ENCODE measurements at regions of chr15 and their contacts with region 1.

Region 1: DNA sequence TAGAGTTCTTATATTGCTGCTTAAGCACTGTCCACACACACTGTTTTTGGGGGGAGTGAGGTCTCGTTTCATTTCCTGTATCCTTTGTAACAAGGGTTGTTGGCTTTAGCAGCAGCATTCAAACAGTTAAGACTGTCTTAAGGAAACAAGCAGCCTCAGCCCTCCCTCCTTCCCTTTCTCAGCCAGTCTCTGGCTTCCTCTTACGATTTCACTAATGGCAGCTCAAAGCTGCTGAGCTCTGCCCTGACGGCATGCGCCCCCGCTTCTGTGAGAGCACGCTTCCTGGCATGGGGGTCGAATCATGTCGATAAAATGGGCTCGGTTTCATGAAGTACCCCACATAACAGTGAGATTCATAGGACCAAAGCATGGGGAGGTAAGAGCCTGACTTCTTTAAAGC is 105.0 kb downstream of the KLHL25 start:
- DNase-seq: peak; percentile 83
- ATAC-seq: peak; percentile 75
- H3K4me3 Mint-ChIP-seq: peak overlapping the region; percentile 87
- H3K27ac Mint-ChIP-seq: peak overlapping the region; percentile 97
- H3K4me1 Mint-ChIP-seq: peaks cover 67% of the 10 kb centered on the region
- H3K27me3 Mint-ChIP-seq: no peaks in the 10 kb centered on the region

Region 2: DNA sequence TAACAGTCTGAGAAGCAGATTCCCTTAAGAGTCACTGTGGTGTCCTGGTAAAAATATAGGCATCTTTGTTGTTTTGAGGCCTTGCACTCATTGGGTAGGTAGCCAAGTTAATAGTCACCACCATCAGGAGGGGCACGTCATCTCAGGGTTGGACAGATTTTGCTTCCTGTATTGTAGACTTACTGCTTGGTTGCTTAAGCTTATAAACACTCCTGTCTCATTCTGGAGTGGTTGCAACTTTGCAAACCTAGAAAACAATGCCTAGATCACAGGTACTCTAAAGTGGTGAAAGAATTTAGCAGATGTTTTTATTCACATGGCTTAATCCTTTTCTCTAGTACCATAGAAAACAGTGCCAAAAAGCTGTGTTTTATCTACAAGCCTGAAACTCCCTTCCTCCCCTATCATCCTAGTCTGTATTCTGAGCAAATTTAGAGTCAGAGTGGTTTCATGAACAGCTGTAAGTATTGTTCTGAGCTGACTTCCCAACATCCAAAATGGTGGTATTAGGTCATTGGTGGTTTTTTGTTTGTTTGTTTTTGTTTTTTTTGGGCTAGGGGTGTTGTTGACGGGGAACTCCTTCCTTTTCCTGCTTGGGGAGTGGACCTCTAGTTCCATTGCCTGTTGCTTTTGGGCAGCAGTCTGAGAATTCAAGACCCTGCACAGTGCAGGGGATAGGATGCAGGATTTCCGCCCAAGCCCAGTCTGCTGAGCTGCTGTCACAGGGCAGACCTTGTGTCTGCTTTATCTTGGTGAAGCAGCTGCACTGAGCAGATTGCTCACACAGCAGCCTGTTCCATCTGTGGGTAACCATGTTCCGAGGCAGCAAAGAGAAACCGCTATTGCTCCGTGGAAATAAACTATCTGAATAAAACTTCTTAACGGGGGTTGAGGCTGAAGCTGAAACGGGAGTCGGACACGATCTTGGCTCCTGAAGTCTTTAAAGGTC is 107.3 kb before region 1 on chr15:
- CTCF ChIA-PET with region 1: interaction called, 10 read pairs
- POLR2A ChIA-PET with region 1: interaction called, 40 read pairs
- DNase-seq: peak; percentile 82
- ATAC-seq: peak; percentile 90
- H3K4me3 Mint-ChIP-seq: peak overlapping the region; percentile 82
- H3K27ac Mint-ChIP-seq: peak overlapping the region; percentile 95
- H3K4me1 Mint-ChIP-seq: peaks cover 65% of the 10 kb centered on the region
- H3K27me3 Mint-ChIP-seq: no peaks in the 10 kb centered on the region

Region 3: DNA sequence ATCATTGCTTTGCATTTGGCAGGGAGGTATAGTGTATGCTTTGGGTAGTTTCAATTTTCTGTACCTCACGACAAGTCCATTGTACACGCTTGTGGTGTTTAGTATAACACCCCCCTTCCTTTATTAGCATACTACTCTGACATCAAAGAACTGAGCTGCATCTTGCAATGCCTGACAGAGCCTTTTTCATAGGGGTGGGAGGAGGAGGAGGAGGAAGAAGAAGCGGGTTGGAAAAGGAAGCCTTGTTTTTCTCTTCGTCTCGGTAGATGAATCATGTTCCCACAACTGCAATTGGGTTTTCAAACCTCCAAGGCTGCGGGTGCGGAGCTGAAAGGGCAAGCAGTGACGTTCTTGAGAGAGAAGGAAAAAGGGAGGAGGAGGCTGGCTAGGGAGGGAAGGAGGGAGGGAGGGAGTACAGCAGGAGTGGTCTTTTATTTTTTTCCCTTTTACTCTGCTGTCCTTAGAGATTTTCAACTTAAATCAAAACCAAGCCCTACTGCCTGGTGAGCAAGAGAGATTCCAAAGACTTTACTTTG is 70.7 kb before region 1 on chr15:
- CTCF ChIA-PET with region 1: interaction called, 14 read pairs
- POLR2A ChIA-PET with region 1: interaction called, 17 read pairs
- DNase-seq: peak; percentile 59
- ATAC-seq: peak; percentile 84
- H3K4me3 Mint-ChIP-seq: no peak overlapping the region
- H3K27ac Mint-ChIP-seq: no peak overlapping the region
- H3K4me1 Mint-ChIP-seq: peaks cover 26% of the 10 kb centered on the region
- H3K27me3 Mint-ChIP-seq: no peaks in the 10 kb centered on the region

Region 4: GRCh38 chr15:85625856-85626255 is 63.9 kb before region 1 on chr15:
- CTCF ChIA-PET with region 1: interaction called, 13 read pairs
- POLR2A ChIA-PET with region 1: interaction called, 15 read pairs
- DNase-seq: peak; percentile 55
- ATAC-seq: peak; percentile 77
- H3K4me3 Mint-ChIP-seq: peak overlapping the region; percentile 64
- H3K27ac Mint-ChIP-seq: peak overlapping the region; percentile 60
- H3K4me1 Mint-ChIP-seq: peaks cover 60% of the 10 kb centered on the region
- H3K27me3 Mint-ChIP-seq: no peaks in the 10 kb centered on the region

Region 5: DNA sequence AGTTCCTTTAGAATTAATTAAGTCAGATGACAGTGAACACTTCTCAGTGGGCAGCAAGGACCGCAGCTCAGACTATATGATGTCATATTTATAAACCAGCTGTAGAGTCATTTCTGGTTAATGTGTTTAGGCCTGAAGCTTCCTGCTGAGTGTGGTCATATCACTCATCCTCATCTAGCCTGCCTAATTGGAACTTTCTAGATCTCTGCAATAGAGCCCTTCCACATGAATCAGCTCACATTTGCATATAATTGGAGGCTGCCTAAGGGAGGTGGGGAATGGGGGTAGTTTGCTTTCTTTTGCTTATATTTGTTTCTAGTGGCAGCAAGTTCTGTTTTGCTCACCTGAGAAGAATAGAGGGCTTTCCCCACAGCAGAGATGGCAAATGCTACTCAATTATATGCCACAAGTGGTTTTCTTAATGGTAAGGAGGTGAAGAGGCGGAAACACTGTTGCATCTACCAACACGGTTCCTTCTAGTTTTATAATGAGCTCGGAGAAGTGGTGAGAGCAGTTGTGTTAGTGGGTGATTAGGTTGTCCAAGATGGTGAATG is 43.1 kb before region 1 on chr15:
- CTCF ChIA-PET with region 1: interaction called, 4 read pairs
- POLR2A ChIA-PET with region 1: interaction called, 35 read pairs
- DNase-seq: peak; percentile 61
- ATAC-seq: peak; percentile 81
- H3K4me3 Mint-ChIP-seq: peak overlapping the region; percentile 34
- H3K27ac Mint-ChIP-seq: peak overlapping the region; percentile 64
- H3K4me1 Mint-ChIP-seq: peaks cover 41% of the 10 kb centered on the region
- H3K27me3 Mint-ChIP-seq: no peaks in the 10 kb centered on the region

Region 6: DNA sequence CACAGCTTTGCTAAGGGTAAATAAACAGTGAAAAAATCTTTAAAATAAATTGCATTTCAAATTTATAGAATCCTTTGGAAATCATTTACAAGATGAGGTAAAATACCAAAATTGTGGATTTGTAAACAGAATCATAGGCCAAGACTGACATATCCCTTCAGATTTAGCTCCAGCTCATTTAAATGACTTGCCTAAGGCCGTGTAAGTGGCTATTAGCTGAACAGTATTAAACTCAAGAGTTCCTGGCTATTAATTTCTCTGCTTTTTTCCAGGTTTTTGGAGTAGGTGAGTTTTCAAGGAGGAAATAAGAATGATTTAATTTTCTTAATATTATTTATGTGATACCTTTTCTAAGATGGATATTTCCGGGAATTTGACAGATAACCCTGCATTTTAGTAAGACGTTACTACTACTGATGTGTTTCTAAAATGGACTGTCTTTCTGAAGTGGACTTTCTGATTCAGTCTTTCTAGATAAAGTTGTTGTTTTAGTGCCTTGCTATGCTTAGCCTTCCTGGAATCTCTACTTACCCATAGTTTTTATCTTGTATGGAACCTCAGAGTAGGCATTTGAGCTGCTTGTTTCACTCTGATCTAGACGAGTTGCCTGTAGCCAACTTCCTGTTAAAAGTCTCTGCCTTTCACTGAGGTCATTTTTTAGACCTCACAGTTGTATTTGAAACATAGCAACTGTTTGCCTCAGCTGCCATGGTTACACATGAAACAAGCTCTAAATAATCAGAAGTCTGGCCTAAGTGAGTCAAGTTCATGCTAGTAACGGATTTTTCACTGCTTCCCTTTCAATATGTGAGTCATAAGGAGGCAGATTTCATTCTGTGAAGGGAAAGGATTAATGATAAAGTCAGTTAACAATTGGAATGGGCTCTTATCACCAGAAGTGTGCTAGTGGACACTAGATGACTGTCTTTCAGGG is 22.0 kb before region 1 on chr15:
- CTCF ChIA-PET with region 1: interaction called, 21 read pairs
- POLR2A ChIA-PET with region 1: interaction called, 47 read pairs
- DNase-seq: peak; percentile 82
- ATAC-seq: peak; percentile 97
- H3K4me3 Mint-ChIP-seq: peak overlapping the region; percentile 9
- H3K27ac Mint-ChIP-seq: peak overlapping the region; percentile 87
- H3K4me1 Mint-ChIP-seq: peaks cover 19% of the 10 kb centered on the region
- H3K27me3 Mint-ChIP-seq: no peaks in the 10 kb centered on the region

Region 7: DNA sequence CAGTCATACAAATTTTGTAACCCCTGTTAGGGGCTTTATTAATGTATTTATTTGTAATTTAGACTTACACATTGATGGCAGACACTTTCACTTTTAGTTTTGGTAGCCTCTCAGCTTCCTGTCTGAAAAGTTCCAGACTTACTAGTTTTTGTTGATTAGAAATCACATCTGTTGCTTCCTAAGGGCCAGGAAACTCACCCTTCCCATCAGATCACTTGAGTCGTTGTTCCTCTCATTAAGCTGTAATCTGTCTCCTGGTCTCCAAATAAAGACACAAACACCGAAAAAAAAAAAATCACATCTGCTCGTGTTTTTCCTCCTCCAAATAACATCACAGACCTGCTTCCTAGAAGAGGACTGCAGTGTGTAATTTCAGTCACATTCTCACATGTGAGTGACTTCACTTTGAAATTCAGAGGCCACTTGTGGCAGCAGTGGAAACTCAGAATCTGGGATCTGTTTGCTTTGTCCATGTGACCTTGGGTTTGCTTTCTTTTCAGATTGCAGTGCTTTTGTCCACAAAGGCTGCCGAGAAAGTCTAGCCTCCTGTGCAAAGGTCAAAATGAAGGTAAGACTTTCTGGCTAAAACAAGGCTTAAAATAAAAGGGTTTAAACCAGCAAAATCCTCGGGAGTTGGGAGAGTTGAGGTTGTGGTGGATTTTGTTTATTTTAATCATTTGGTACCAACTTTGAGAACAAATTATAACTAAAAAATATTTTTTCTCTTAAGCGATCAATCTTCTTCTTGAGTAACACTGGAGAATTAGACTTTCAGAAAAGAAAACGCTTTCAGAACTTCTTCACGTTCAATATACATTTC is 18.0 kb after region 1 on chr15:
- CTCF ChIA-PET with region 1: interaction called, 79 read pairs
- POLR2A ChIA-PET with region 1: interaction called, 174 read pairs
- DNase-seq: no peak
- ATAC-seq: peak; percentile 20
- H3K4me3 Mint-ChIP-seq: peak overlapping the region; percentile 71
- H3K27ac Mint-ChIP-seq: peak overlapping the region; percentile 91
- H3K4me1 Mint-ChIP-seq: peaks cover 54% of the 10 kb centered on the region
- H3K27me3 Mint-ChIP-seq: no peaks in the 10 kb centered on the region

Measured in activated CD8-positive, alpha-beta T cell treated with anti-CD3 and anti-CD28 coated beads, Interleukin-2, amount 10 ng/mL, durations not matched to agents 7 days and 5 days (primary cell).